Naive thymus-derived CD4-positive, alpha-beta T cell (primary cell): ENCODE measurements at regions of chr2 and their contacts with region 1.

Region 1: GRCh38 chr2:84905181-84906107 is at the start of gene TMSB10:
- DNase-seq: peak; percentile 87 to 98 (median 94)
- ATAC-seq: peak; percentile 88
- H3K4me3 ChIP-seq: peak within 1 kb of the TSS; percentile 89
- H3K4me3 Mint-ChIP-seq: peak within 1 kb of the TSS; percentile 90 to 98 (median 95)
- H3K27ac ChIP-seq: peak within 1 kb of the TSS; percentile 81
- H3K27ac Mint-ChIP-seq: peak within 1 kb of the TSS; percentile 89 to 99 (median 96)
- H3K4me1 ChIP-seq: peaks cover 30 to 34% of the 10 kb centered on the region in 2 donors
- H3K4me1 Mint-ChIP-seq: peaks cover 39 to 73% (median 67%) of the 10 kb centered on the region in 7 donors
- H3K27me3 ChIP-seq: no peaks in the 10 kb centered on the region
- H3K27me3 Mint-ChIP-seq: peaks cover 0 to 2% (median 0%) of the 10 kb centered on the region in 5 donors
- total RNA-seq, gene TMSB10: 1,492 to 5,756 (median 1,578) TPM

Region 2: GRCh38 chr2:83782122-83782521 is 1123.3 kb before region 1 on chr2:
- CTCF ChIA-PET with region 1: no interaction called
- POLR2A ChIA-PET with region 1: no interaction called
- intact Hi-C with region 1: no loop called
- DNase-seq: no peak
- ATAC-seq: no peak
- H3K4me3 ChIP-seq: no peak overlapping the region
- H3K4me3 Mint-ChIP-seq: no peak overlapping the region
- H3K27ac ChIP-seq: no peak overlapping the region
- H3K27ac Mint-ChIP-seq: no peak overlapping the region
- H3K4me1 ChIP-seq: no peaks in the 10 kb centered on the region
- H3K4me1 Mint-ChIP-seq: no peaks in the 10 kb centered on the region
- H3K27me3 ChIP-seq: no peaks in the 10 kb centered on the region
- H3K27me3 Mint-ChIP-seq: peaks cover 0 to 6% (median 0%) of the 10 kb centered on the region in 5 donors

Region 3: GRCh38 chr2:84495539-84496146 is 409.8 kb before region 1 on chr2:
- CTCF ChIA-PET with region 1: no interaction called
- POLR2A ChIA-PET with region 1: interaction called, 4 read pairs
- intact Hi-C with region 1: loop called in 1 of 2 experiments (anchors 1 kb)
- DNase-seq: peak in 7 of 9 donors; percentile 61 to 81 (median 73)
- ATAC-seq: peak; percentile 96
- H3K4me3 ChIP-seq: no peak overlapping the region
- H3K4me3 Mint-ChIP-seq: peak overlapping the region in 1 of 10 donors; percentile 23
- H3K27ac ChIP-seq: no peak overlapping the region
- H3K27ac Mint-ChIP-seq: peak overlapping the region in 7 of 9 donors; percentile 35 to 82 (median 76)
- H3K4me1 ChIP-seq: peaks cover 0 to 5% of the 10 kb centered on the region in 2 donors
- H3K4me1 Mint-ChIP-seq: peaks cover 9 to 31% (median 28%) of the 10 kb centered on the region in 7 donors
- H3K27me3 ChIP-seq: no peaks in the 10 kb centered on the region
- H3K27me3 Mint-ChIP-seq: peaks cover 0 to 14% (median 0%) of the 10 kb centered on the region in 5 donors

Region 4: GRCh38 chr2:84840306-84840705 is 65.1 kb before region 1 on chr2:
- CTCF ChIA-PET with region 1: interaction called, 5 read pairs
- POLR2A ChIA-PET with region 1: interaction called, 67 read pairs
- intact Hi-C with region 1: loop called in 1 of 2 experiments (anchors 5 kb)
- DNase-seq: no peak
- ATAC-seq: peak; percentile 28
- H3K4me3 ChIP-seq: peak overlapping the region; percentile 43
- H3K4me3 Mint-ChIP-seq: peak overlapping the region; percentile 75 to 90 (median 82)
- H3K27ac ChIP-seq: peak overlapping the region; percentile 80
- H3K27ac Mint-ChIP-seq: peak overlapping the region in 8 of 9 donors; percentile 78 to 99 (median 96)
- H3K4me1 ChIP-seq: peaks cover 71 to 95% of the 10 kb centered on the region in 2 donors
- H3K4me1 Mint-ChIP-seq: peaks cover 49 to 97% (median 88%) of the 10 kb centered on the region in 7 donors
- H3K27me3 ChIP-seq: no peaks in the 10 kb centered on the region
- H3K27me3 Mint-ChIP-seq: no peaks in the 10 kb centered on the region

Region 5: DNA sequence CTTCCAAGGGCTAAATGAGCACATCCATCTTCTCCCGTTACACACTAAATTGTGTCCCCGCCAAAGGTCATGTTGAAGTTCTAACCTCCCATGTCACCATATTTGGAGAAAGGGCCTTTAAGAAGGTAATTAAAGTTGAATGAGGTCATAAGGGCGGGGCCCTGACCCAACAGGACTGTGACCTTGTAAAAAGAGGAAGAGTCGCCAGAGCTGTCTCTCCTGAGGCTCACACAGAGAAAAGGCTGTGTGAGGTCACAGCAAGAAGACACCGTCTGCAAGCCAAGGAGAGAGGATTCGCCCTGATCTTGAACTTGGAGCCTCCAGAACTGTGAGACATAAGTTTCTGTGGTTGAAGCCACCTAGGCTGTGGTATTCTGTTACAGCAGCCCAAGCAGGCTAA is 48.7 kb before region 1 on chr2:
- CTCF ChIA-PET with region 1: no interaction called
- POLR2A ChIA-PET with region 1: interaction called, 67 read pairs
- intact Hi-C with region 1: no loop called
- DNase-seq: peak in 2 of 9 donors; percentile 31 to 49
- ATAC-seq: peak; percentile 73
- H3K4me3 ChIP-seq: no peak overlapping the region
- H3K4me3 Mint-ChIP-seq: peak overlapping the region; percentile 54 to 89 (median 85)
- H3K27ac ChIP-seq: peak overlapping the region; percentile 72
- H3K27ac Mint-ChIP-seq: peak overlapping the region; percentile 85 to 99 (median 96)
- H3K4me1 ChIP-seq: peaks cover 53 to 95% of the 10 kb centered on the region in 2 donors
- H3K4me1 Mint-ChIP-seq: peaks cover 72 to 98% (median 96%) of the 10 kb centered on the region in 7 donors
- H3K27me3 ChIP-seq: no peaks in the 10 kb centered on the region
- H3K27me3 Mint-ChIP-seq: no peaks in the 10 kb centered on the region

Region 6: GRCh38 chr2:84888401-84889276 is 16.8 kb before region 1 on chr2:
- CTCF ChIA-PET with region 1: interaction called, 23 read pairs
- POLR2A ChIA-PET with region 1: interaction called, 617 read pairs
- intact Hi-C with region 1: loop called (anchors 1 kb)
- DNase-seq: peak in 8 of 9 donors; percentile 46 to 80 (median 72)
- ATAC-seq: peak; percentile 98
- H3K4me3 ChIP-seq: peak overlapping the region; percentile 62
- H3K4me3 Mint-ChIP-seq: peak overlapping the region; percentile 79 to 88 (median 86)
- H3K27ac ChIP-seq: peak overlapping the region; percentile 85
- H3K27ac Mint-ChIP-seq: peak overlapping the region; percentile 92 to 100 (median 97)
- H3K4me1 ChIP-seq: peaks cover 21 to 22% of the 10 kb centered on the region in 2 donors
- H3K4me1 Mint-ChIP-seq: peaks cover 22 to 71% (median 59%) of the 10 kb centered on the region in 7 donors
- H3K27me3 ChIP-seq: no peaks in the 10 kb centered on the region
- H3K27me3 Mint-ChIP-seq: no peaks in the 10 kb centered on the region

Region 7: DNA sequence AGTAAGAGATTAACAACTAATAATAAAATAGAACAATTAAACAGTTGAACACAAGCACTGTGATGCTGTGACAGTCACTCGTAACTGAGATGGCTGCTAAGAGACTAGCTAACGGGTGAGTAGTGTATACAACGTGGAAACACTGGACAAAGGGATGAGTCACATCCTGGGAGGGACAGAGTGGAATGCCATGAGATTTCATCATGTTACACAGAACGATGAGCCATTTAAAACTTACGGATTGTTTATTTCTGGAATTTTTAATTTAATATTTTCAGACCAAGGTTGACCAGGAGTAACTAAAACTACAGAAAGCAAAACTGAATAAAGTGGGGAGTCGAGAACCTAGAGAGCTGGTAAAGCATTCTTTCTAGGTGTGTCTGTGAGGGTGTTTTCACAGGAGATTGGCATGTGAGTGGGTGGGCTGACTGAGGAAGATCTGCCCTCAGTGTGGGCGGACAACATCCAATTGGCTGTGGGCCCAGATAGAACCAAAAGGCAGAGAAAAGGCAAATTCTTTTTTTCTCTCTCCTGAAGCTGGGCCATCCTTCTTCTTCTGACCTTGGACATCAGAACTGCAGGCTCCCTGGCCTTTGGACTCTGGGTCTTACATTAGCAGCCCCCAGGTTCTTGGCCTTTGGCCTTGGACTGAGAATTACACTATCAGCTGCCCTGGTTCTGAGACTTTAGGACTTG is 14.6 kb after region 1 on chr2:
- CTCF ChIA-PET with region 1: interaction called, 87 read pairs
- POLR2A ChIA-PET with region 1: interaction called, 495 read pairs
- intact Hi-C with region 1: loop called (anchors 1 kb)
- DNase-seq: peak in 6 of 9 donors; percentile 26 to 59 (median 46)
- ATAC-seq: peak; percentile 75
- H3K4me3 ChIP-seq: no peak overlapping the region
- H3K4me3 Mint-ChIP-seq: peak overlapping the region; percentile 47 to 79 (median 70)
- H3K27ac ChIP-seq: peak overlapping the region; percentile 62
- H3K27ac Mint-ChIP-seq: peak overlapping the region; percentile 85 to 97 (median 92)
- H3K4me1 ChIP-seq: peaks cover 15 to 39% of the 10 kb centered on the region in 2 donors
- H3K4me1 Mint-ChIP-seq: peaks cover 28 to 70% (median 53%) of the 10 kb centered on the region in 7 donors
- H3K27me3 ChIP-seq: peaks cover 0 to 3% of the 10 kb centered on the region in 2 donors
- H3K27me3 Mint-ChIP-seq: no peaks in the 10 kb centered on the region

Region 8: GRCh38 chr2:84946204-84947009 is 41.0 kb after region 1 on chr2:
- CTCF ChIA-PET with region 1: no interaction called
- POLR2A ChIA-PET with region 1: interaction called, 34 read pairs
- intact Hi-C with region 1: no loop called
- DNase-seq: peak; percentile 20 to 74 (median 57)
- ATAC-seq: peak; percentile 90
- H3K4me3 ChIP-seq: peak overlapping the region; percentile 9
- H3K4me3 Mint-ChIP-seq: peak overlapping the region; percentile 43 to 83 (median 72)
- H3K27ac ChIP-seq: peak overlapping the region; percentile 64
- H3K27ac Mint-ChIP-seq: peak overlapping the region; percentile 42 to 93 (median 81)
- H3K4me1 ChIP-seq: peaks cover 16 to 23% of the 10 kb centered on the region in 2 donors
- H3K4me1 Mint-ChIP-seq: peaks cover 27 to 66% (median 32%) of the 10 kb centered on the region in 7 donors
- H3K27me3 ChIP-seq: no peaks in the 10 kb centered on the region
- H3K27me3 Mint-ChIP-seq: no peaks in the 10 kb centered on the region

Region 9: GRCh38 chr2:85266146-85267041 is 360.9 kb after region 1 on chr2:
- CTCF ChIA-PET with region 1: no interaction called
- POLR2A ChIA-PET with region 1: no interaction called
- intact Hi-C with region 1: no loop called
- DNase-seq: peak; percentile 27 to 76 (median 48)
- ATAC-seq: peak; percentile 78
- H3K4me3 ChIP-seq: no peak overlapping the region
- H3K4me3 Mint-ChIP-seq: no peak overlapping the region
- H3K27ac ChIP-seq: no peak overlapping the region
- H3K27ac Mint-ChIP-seq: peak overlapping the region in 1 of 9 donors; percentile 21
- H3K4me1 ChIP-seq: no peaks in the 10 kb centered on the region
- H3K4me1 Mint-ChIP-seq: peaks cover 0 to 2% (median 0%) of the 10 kb centered on the region in 7 donors
- H3K27me3 ChIP-seq: no peaks in the 10 kb centered on the region
- H3K27me3 Mint-ChIP-seq: peaks cover 0 to 26% (median 0%) of the 10 kb centered on the region in 5 donors